Mammary epithelial cell (primary cell): ENCODE measurements at regions of chr10 and their contacts with region 1.

Region 1: DNA sequence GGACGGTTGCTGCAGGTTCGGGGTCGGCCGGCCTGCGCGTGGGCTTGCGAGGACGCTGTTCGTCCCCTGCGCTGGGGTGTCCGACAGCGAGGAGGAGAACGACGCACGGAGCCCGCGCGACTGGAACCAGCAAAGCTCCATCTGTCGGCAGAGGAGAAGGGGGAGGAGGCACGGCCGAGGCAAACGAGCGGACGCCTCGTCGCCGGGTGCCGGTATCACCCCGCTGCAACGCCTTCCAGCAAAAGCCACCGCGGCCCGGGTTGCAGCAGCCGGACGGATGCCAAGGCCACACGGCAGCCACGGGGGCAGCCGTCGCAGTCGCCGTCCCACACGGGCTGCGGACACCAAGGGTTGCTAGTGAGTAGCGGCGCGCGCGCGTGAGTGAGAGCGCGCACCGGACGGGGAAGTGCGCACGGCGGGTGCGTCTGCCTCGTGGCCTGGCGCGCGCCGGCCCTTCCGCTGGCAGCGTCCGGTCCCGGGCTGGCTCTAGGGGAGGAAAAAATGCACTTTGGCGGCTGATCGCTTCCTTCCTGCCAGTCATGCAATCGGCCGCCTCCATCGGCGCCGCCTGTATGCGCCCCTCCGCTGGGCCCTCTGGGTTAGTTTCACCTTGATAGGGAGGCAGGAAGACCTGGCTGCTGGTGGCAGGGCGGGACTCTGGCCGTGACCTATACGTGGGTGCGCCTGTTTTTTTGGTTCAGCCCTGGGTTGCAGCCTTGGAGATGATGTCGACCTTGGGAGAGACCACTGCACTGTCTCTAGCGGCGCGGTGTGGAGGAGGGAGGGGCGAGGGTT is 434 bp downstream of the STAMBPL1 start:
- DNase-seq: peak; percentile 83
- H3K4me3 ChIP-seq: peak overlapping the region; percentile 76 to 96 (median 78)
- H3K27ac ChIP-seq: peak overlapping the region; percentile 71
- H3K4me1 ChIP-seq: peaks cover 35% of the 10 kb centered on the region
- H3K27me3 ChIP-seq: no peaks in the 10 kb centered on the region
- CTCF ChIP-seq: peak in 1 of 2 donors; percentile 44

Region 2: GRCh38 chr10:88851706-88852105 is 28.8 kb before region 1 on chr10 and contains the start of gene ANKRD22:
- CTCF ChIA-PET with region 1: interaction called, 4 read pairs
- dilution Hi-C with region 1: no loop called
- in situ Hi-C with region 1: no loop called
- intact Hi-C with region 1: loop called (anchors 2 kb)
- DNase-seq: peak; percentile 99
- H3K4me3 ChIP-seq: peak within 1 kb of the TSS in 1 of 3 experiments; percentile 15
- H3K27ac ChIP-seq: peak within 1 kb of the TSS; percentile 59
- H3K4me1 ChIP-seq: peaks cover 43% of the 10 kb centered on the region
- H3K27me3 ChIP-seq: no peaks in the 10 kb centered on the region
- CTCF ChIP-seq: no peak
- total RNA-seq, gene ANKRD22: 0.87 TPM in 1 of 2 donors, not detected in the other

Region 3: DNA sequence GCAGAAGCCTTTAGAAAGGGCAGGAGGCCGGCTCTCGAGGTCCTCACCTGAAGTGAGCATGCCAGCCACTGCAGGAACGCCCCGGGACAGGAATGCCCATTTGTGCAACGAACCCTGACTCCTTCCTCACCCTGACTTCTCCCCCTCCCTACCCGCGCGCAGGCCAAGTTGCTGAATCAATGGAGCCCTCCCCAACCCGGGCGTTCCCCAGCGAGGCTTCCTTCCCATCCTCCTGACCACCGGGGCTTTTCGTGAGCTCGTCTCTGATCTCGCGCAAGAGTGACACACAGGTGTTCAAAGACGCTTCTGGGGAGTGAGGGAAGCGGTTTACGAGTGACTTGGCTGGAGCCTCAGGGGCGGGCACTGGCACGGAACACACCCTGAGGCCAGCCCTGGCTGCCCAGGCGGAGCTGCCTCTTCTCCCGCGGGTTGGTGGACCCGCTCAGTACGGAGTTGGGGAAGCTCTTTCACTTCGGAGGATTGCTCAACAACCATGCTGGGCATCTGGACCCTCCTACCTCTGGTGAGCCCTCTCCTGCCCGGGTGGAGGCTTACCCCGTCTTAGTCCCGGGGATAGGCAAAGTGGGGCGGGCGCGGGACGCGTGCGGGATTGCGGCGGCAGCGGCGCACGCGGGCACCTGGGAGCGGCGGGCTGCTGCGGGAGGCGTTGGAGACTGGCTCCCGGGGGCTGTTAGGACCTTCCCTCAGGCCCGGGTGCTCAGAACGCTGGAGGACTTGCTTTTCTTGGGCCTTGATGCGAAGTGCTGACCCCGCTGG is 110.1 kb after region 1 on chr10 and contains the start of gene FAS:
- CTCF ChIA-PET with region 1: no interaction called
- dilution Hi-C with region 1: no loop called
- in situ Hi-C with region 1: no loop called
- intact Hi-C with region 1: loop called (anchors 5 kb)
- DNase-seq: peak; percentile 96
- H3K4me3 ChIP-seq: peak within 1 kb of the TSS; percentile 87 to 94 (median 93)
- H3K27ac ChIP-seq: peak within 1 kb of the TSS; percentile 97
- H3K4me1 ChIP-seq: peaks cover 27% of the 10 kb centered on the region
- H3K27me3 ChIP-seq: no peaks in the 10 kb centered on the region
- CTCF ChIP-seq: no peak
- total RNA-seq, gene FAS: 50.0 to 71.8 TPM